ENCODE measurements at regions of chr3 and their contacts with region 1.

Region 1: GRCh38 chr3:126679318-126679751 is 24.4 kb upstream of the TXNRD3 start:
- DNase-seq: peak; percentile 73 to 88 (median 79)
- ATAC-seq: peak; percentile 76 to 94 (median 90)
- H3K4me3 ChIP-seq: no peak overlapping the region
- H3K27ac ChIP-seq: no peak overlapping the region
- H3K4me1 ChIP-seq: peaks cover 0 to 9% (median 5%) of the 10 kb centered on the region in 12 donors
- H3K27me3 ChIP-seq: peaks cover 0 to 40% (median 0%) of the 10 kb centered on the region in 9 donors
- CTCF ChIP-seq: peak; percentile 92 to 98 (median 96)
- POLR2A ChIP-seq: no peak

Region 2: GRCh38 chr3:126703512-126704462 is 24.5 kb after region 1 on chr3 and contains the start of gene CHCHD6:
- intact Hi-C with region 1: no loop called
- DNase-seq: peak; percentile 94 to 99 (median 96)
- ATAC-seq: peak; percentile 98 to 100 (median 100)
- H3K4me3 ChIP-seq: peak within 1 kb of the TSS; percentile 62 to 93 (median 80)
- H3K27ac ChIP-seq: peak within 1 kb of the TSS in 5 of 12 donors; percentile 35 to 70 (median 58)
- H3K4me1 ChIP-seq: peaks cover 0 to 24% (median 11%) of the 10 kb centered on the region in 12 donors
- H3K27me3 ChIP-seq: peaks cover 0 to 18% (median 0%) of the 10 kb centered on the region in 9 donors
- CTCF ChIP-seq: peak in 3 of 12 donors; percentile 9 to 32 (median 25)
- POLR2A ChIP-seq: no peak
- total RNA-seq, gene CHCHD6: 7.7 to 14.2 (median 10.7) TPM

Region 3: DNA sequence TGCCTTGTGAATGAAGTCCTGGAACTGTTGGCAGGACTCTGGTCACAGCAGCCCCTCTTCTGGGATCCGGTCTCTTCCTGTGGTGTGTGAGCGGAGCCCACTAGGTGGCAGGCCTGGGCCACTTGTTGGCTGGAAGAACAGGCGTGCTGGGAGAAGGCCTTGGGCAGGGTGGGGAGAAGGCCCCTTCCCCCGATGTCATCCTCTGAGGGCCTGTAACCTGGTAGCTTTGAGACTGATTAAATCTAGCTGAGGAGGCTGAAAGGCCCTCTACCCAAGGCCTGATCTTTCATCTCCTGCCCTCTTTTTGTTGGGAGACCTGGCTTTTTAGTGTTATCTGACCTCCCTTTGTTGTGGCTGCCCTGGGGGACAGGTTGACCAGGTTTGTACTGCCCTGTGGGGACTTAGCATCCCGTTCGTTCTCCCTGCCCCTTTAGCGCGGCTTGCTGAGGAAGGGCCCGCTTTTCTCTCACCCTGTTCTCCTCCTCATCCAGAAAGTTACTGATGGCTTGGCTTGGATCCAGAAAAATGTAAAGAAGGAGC is 73.0 kb after region 1 on chr3:
- intact Hi-C with region 1: loop called in 5 of 10 experiments (anchors 5 kb)
- DNase-seq: peak; percentile 72 to 88 (median 79)
- ATAC-seq: peak; percentile 85 to 94 (median 90)
- H3K4me3 ChIP-seq: no peak overlapping the region
- H3K27ac ChIP-seq: no peak overlapping the region
- H3K4me1 ChIP-seq: peaks cover 0 to 38% (median 12%) of the 10 kb centered on the region in 12 donors
- H3K27me3 ChIP-seq: no peaks in the 10 kb centered on the region
- CTCF ChIP-seq: peak; percentile 74 to 91 (median 86)
- POLR2A ChIP-seq: no peak

Region 4: DNA sequence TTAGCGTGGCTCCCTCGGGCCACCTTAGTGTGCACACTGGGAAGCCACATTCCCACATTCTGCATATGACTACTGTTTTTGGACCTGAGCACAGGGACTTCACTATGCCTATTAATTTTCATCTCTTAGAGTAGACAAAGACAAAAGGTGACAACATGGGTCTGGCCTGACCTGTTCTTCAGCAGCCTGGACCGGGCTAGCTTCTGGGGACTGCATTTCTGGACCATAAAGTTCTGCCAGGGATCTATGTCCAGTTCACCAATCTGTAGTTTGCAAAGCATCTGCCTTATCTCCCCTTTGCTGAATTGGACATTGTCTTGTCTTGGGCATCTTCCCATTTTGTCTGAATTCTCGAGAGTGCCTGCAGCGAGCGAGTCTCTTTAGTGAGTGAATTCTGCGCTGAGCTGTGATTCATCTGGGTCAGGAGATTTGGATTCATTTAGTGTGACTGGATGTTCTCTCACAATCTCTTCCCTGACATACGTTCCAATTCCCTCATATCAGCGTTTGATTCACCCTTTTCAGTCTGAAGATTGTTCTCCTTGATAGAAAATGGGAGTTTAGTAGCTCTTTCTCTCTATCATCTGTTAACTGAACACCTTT is 191.4 kb after region 1 on chr3:
- intact Hi-C with region 1: no loop called
- DNase-seq: no peak
- ATAC-seq: peak in 3 of 4 donors; percentile 15 to 61 (median 21)
- H3K4me3 ChIP-seq: no peak overlapping the region
- H3K27ac ChIP-seq: no peak overlapping the region
- H3K4me1 ChIP-seq: peaks cover 0 to 21% (median 7%) of the 10 kb centered on the region in 12 donors
- H3K27me3 ChIP-seq: no peaks in the 10 kb centered on the region
- CTCF ChIP-seq: no peak
- POLR2A ChIP-seq: no peak

Region 5: GRCh38 chr3:126982471-126983175 is 303.3 kb after region 1 on chr3 and contains the start of gene PLXNA1:
- intact Hi-C with region 1: loop called (anchors 2 to 10 kb)
- DNase-seq: peak; percentile 76 to 91 (median 77)
- ATAC-seq: peak; percentile 47 to 85 (median 78)
- H3K4me3 ChIP-seq: peak within 1 kb of the TSS; percentile 60 to 91 (median 78)
- H3K27ac ChIP-seq: peak within 1 kb of the TSS in 11 of 12 donors; percentile 60 to 93 (median 74)
- H3K4me1 ChIP-seq: peaks cover 0 to 50% (median 24%) of the 10 kb centered on the region in 12 donors
- H3K27me3 ChIP-seq: peaks cover 0 to 4% (median 0%) of the 10 kb centered on the region in 9 donors
- CTCF ChIP-seq: peak; percentile 81 to 93 (median 88)
- POLR2A ChIP-seq: peak in 1 of 2 donors; percentile 35
- total RNA-seq, gene PLXNA1: 19.5 to 38.8 (median 29.6) TPM

Region 6: GRCh38 chr3:127172781-127173515 is 493.6 kb after region 1 on chr3:
- intact Hi-C with region 1: loop called in 9 of 10 experiments (anchors 2 to 10 kb)
- DNase-seq: no peak
- ATAC-seq: no peak
- H3K4me3 ChIP-seq: no peak overlapping the region
- H3K27ac ChIP-seq: no peak overlapping the region
- H3K4me1 ChIP-seq: peaks cover 0 to 7% (median 0%) of the 10 kb centered on the region in 12 donors
- H3K27me3 ChIP-seq: peaks cover 0 to 17% (median 0%) of the 10 kb centered on the region in 9 donors
- CTCF ChIP-seq: no peak
- POLR2A ChIP-seq: no peak

Region 7: DNA sequence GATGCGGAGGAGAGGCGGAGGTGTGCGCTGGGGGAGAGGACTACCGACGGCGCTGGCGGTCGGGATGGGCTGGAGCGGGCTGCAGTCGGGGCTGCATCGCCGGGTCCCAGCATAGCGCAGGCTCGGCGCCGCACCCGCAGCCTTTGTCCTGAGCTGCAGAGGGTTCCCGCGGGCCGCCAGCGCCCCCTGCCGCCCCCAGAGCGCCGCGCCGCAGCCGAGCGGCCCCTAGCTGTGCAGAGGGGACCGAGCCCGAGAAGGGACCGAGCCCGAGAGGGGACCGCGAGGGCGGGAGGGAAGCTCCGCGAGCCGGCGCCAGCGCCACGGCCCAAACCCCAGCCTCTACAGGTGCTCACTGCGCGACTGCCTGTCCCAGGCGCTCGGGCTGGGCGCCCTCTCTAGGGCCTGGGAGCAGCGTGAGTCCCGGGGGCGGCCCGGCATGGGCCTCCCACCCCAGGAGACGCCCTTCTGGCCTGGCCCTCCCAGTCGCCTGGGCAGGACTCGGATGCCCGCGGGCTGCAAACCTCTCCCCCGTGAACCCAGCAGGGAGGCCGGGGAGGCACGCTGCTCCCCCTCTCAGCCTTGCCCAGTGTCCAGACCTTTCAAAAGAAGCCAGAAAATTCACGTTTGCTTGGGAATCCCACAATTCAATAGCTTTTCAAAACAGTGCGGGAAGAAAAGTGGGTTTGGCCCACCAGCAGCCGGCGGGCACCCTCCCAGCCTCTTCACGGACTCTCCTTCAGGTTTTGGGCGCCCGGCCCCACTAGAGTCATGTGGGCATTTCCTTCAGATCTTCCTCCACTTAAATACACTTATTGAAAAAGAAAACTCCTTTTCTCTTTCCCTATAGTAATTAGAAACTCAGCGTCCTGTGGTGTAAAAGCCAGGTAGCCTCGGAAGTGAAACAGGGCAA is 776.5 kb after region 1 on chr3:
- intact Hi-C with region 1: loop called (anchors 1 to 5 kb)
- DNase-seq: peak; percentile 57 to 86 (median 66)
- ATAC-seq: peak; percentile 55 to 93 (median 87)
- H3K4me3 ChIP-seq: peak overlapping the region in 10 of 12 donors; percentile 8 to 47 (median 30)
- H3K27ac ChIP-seq: no peak overlapping the region
- H3K4me1 ChIP-seq: peaks cover 0 to 24% (median 17%) of the 10 kb centered on the region in 12 donors
- H3K27me3 ChIP-seq: peaks cover 12 to 68% (median 54%) of the 10 kb centered on the region in 9 donors
- CTCF ChIP-seq: peak; percentile 85 to 98 (median 93)
- POLR2A ChIP-seq: no peak

Measured in heart left ventricle (tissue), 16 donors.